ENCODE measurements at regions of chr11 and their contacts with region 1.

Region 1: DNA sequence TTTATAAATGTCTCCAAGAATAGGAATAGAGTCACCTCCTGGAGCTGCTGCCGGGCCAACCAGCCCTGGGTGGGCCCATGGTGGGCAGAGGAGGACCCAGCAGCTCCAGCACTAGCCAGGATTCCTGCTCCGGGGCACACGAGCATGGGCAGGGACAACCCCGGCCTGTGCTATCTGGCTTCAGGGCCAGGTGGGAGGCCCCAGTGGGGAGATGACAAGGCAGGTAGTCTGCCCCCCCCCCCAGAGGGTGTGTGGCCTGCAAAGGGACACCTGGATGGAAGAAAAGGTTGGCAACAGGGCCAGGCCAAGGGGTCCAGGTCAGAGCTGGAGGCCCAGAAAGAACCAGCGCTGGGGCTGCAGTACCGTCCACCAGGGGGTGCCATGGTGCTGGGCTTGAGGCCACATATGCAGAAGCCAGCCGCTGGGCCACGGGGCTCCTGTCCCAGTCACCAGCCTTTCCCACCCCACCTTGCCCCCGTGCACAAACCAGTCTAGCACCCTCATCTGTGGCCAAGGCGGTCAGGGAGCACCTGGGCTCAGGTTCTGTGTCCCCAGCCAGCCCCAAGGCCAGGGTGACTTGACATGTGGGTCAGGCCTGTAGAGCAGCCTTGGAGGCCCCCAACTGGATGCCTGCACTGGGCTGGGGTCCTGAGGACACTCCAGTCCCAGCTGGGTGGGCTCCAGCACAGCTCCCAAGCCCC is 3.5 kb downstream of the TSPAN32 start:
- DNase-seq: peak; percentile 82
- ATAC-seq: peak; percentile 59
- H3K4me3 Mint-ChIP-seq: peak overlapping the region; percentile 32
- H3K27ac Mint-ChIP-seq: peak overlapping the region; percentile 18
- H3K4me1 Mint-ChIP-seq: peaks cover 60% of the 10 kb centered on the region
- H3K27me3 Mint-ChIP-seq: no peaks in the 10 kb centered on the region
- CTCF ChIP-seq: no peak

Region 2: GRCh38 chr11:2186669-2187279 is 118.5 kb before region 1 on chr11:
- CTCF ChIA-PET with region 1: interaction called, 12 read pairs
- POLR2A ChIA-PET with region 1: no interaction called
- intact Hi-C with region 1: loop called (anchors 2 kb)
- DNase-seq: no peak
- ATAC-seq: peak; percentile 79
- H3K4me3 Mint-ChIP-seq: no peak overlapping the region
- H3K27ac Mint-ChIP-seq: no peak overlapping the region
- H3K4me1 Mint-ChIP-seq: peaks cover 10% of the 10 kb centered on the region
- H3K27me3 Mint-ChIP-seq: peaks cover 7% of the 10 kb centered on the region
- CTCF ChIP-seq: no peak

Region 3: GRCh38 chr11:2377511-2378443 is 72.5 kb after region 1 on chr11:
- CTCF ChIA-PET with region 1: interaction called, 3 read pairs
- POLR2A ChIA-PET with region 1: interaction called, 11 read pairs
- intact Hi-C with region 1: loop called (anchors 2 kb)
- DNase-seq: no peak
- ATAC-seq: peak; percentile 43
- H3K4me3 Mint-ChIP-seq: peak overlapping the region; percentile 82
- H3K27ac Mint-ChIP-seq: peak overlapping the region; percentile 86
- H3K4me1 Mint-ChIP-seq: peaks cover 46% of the 10 kb centered on the region
- H3K27me3 Mint-ChIP-seq: no peaks in the 10 kb centered on the region
- CTCF ChIP-seq: no peak

Region 4: DNA sequence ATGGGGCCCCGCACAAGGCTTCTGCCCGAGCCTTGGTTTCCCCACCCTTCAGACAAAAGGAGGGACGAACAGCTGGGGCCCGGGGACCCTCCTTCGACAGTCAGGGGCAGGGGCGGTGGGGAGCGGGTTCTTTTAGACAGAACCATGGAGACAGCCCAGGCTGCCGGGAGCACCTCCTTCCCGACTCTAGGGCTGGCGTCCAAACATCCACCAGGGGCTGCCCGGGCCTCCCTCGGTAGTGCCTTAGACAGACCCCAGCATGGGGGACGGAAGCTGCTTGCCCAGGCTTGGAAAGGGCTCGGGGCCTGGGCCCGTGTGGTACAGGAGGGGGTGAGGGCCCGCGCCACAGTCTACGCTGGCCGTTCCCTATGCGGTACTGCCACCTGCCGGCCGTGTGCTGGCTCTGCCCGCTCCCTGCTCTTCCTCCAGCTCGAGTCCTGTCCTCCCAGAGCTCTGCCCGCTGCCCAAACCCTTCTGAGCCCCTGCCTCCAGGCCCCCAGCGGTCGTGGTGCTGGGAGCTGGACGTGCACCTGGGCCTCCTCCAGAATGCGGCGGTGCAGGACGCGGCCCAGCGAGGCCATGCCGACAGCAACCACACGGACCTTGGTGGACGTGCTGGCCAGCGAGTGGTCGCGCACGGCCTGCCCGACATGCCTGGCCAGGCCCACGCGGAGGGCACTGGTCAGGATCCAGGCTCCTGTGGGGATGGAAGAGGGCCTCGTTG is 115.4 kb after region 1 on chr11:
- CTCF ChIA-PET with region 1: interaction called, 321 read pairs
- POLR2A ChIA-PET with region 1: interaction called, 14 read pairs
- intact Hi-C with region 1: loop called (anchors 1 kb)
- DNase-seq: peak; percentile 69
- ATAC-seq: peak; percentile 97
- H3K4me3 Mint-ChIP-seq: no peak overlapping the region
- H3K27ac Mint-ChIP-seq: no peak overlapping the region
- H3K4me1 Mint-ChIP-seq: peaks cover 6% of the 10 kb centered on the region
- H3K27me3 Mint-ChIP-seq: no peaks in the 10 kb centered on the region
- CTCF ChIP-seq: peak; percentile 32

Region 5: DNA sequence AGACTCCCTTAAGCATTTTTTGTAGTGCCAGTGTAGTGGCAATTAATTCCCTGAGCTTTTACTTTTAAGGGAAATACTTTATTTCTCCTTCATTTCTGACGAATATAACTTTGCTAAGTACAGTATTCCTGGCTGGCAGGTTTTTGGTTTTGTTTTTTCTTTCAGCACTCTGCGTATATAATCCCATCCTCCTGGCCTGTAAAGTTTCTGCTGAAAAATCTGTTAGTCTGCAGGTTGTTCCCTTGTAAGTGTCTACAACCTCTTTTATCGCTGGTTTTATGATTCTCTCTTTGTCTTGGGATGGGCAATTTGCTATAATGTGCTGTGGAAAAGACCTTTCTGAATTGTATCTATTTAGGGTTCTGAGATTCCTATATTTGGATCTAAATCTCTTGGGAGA is 338.5 kb after region 1 on chr11:
- CTCF ChIA-PET with region 1: no interaction called
- POLR2A ChIA-PET with region 1: no interaction called
- intact Hi-C with region 1: no loop called
- DNase-seq: no peak
- ATAC-seq: no peak
- H3K4me3 Mint-ChIP-seq: no peak overlapping the region
- H3K27ac Mint-ChIP-seq: no peak overlapping the region
- H3K4me1 Mint-ChIP-seq: no peaks in the 10 kb centered on the region
- H3K27me3 Mint-ChIP-seq: no peaks in the 10 kb centered on the region
- CTCF ChIP-seq: no peak